Naive thymus-derived CD4-positive, alpha-beta T cell (primary cell): ENCODE measurements at regions of chr16 and their contacts with region 1.

Region 1: GRCh38 chr16:81623363-81624102 is 155.6 kb upstream of the PLCG2 start:
- DNase-seq: peak in 7 of 9 donors; percentile 10 to 58 (median 39)
- ATAC-seq: peak; percentile 65
- H3K4me3 ChIP-seq: no peak overlapping the region
- H3K4me3 Mint-ChIP-seq: no peak overlapping the region
- H3K27ac ChIP-seq: no peak overlapping the region
- H3K27ac Mint-ChIP-seq: peak overlapping the region in 4 of 9 donors; percentile 1 to 54 (median 18)
- H3K4me1 ChIP-seq: no peaks in the 10 kb centered on the region
- H3K4me1 Mint-ChIP-seq: peaks cover 0 to 25% (median 0%) of the 10 kb centered on the region in 7 donors
- H3K27me3 ChIP-seq: no peaks in the 10 kb centered on the region
- H3K27me3 Mint-ChIP-seq: no peaks in the 10 kb centered on the region

Region 2: GRCh38 chr16:81696961-81697615 is 73.6 kb after region 1 on chr16:
- CTCF ChIA-PET with region 1: interaction called, 6 read pairs
- POLR2A ChIA-PET with region 1: no interaction called
- intact Hi-C with region 1: loop called (anchors 1 kb)
- DNase-seq: peak in 5 of 9 donors; percentile 31 to 57 (median 32)
- ATAC-seq: peak; percentile 61
- H3K4me3 ChIP-seq: no peak overlapping the region
- H3K4me3 Mint-ChIP-seq: no peak overlapping the region
- H3K27ac ChIP-seq: no peak overlapping the region
- H3K27ac Mint-ChIP-seq: peak overlapping the region in 1 of 9 donors; percentile 19
- H3K4me1 ChIP-seq: no peaks in the 10 kb centered on the region
- H3K4me1 Mint-ChIP-seq: peaks cover 0 to 16% (median 0%) of the 10 kb centered on the region in 7 donors
- H3K27me3 ChIP-seq: no peaks in the 10 kb centered on the region
- H3K27me3 Mint-ChIP-seq: no peaks in the 10 kb centered on the region